GM12878 (cell line): ENCODE measurements at regions of chr11 and their contacts with region 1.

Region 1: DNA sequence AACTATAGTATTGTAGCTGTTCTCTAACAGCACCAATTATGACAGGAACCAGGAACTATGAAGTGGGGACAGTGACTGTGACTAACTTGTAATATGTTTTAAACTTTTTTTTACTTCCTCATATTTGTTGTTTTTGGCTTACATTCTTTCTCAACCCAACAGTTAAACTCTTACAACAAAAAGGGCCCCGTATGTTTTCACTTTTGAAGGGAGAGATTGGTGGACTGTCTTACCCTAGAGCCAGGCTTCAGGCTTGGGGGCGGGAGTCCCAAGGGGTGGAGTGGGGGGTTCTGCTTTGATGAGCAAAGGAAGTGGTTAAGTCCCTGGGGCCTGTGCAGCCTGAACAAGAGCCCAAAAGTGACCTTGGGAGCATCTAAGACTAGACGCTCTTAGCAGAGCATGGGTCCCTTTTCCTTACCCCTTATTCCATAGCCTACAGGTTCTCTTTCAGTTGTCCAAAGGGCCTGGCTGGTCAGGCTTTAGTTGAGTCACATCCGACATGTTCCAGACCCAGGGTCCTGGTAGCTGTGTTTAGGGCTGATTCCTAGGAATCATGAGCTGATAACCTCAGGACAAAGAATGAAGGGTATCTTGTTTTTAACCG is 38.8 kb downstream of the STIM1 start:
- DNase-seq: peak; percentile 91
- ATAC-seq: peak; percentile 98
- H3K4me3 ChIP-seq: peak overlapping the region; percentile 70
- H3K27ac ChIP-seq: peak overlapping the region; percentile 98
- H3K4me1 ChIP-seq: peaks cover 23% of the 10 kb centered on the region
- H3K27me3 ChIP-seq: no peaks in the 10 kb centered on the region
- CTCF ChIP-seq: no peak
- EP300 ChIP-seq: peak; percentile 81 to 85
- POLR2A ChIP-seq: peak; percentile 56
- RAD21 ChIP-seq: peak; percentile 36; the same call in 1 of the 2 replicates

Region 2: DNA sequence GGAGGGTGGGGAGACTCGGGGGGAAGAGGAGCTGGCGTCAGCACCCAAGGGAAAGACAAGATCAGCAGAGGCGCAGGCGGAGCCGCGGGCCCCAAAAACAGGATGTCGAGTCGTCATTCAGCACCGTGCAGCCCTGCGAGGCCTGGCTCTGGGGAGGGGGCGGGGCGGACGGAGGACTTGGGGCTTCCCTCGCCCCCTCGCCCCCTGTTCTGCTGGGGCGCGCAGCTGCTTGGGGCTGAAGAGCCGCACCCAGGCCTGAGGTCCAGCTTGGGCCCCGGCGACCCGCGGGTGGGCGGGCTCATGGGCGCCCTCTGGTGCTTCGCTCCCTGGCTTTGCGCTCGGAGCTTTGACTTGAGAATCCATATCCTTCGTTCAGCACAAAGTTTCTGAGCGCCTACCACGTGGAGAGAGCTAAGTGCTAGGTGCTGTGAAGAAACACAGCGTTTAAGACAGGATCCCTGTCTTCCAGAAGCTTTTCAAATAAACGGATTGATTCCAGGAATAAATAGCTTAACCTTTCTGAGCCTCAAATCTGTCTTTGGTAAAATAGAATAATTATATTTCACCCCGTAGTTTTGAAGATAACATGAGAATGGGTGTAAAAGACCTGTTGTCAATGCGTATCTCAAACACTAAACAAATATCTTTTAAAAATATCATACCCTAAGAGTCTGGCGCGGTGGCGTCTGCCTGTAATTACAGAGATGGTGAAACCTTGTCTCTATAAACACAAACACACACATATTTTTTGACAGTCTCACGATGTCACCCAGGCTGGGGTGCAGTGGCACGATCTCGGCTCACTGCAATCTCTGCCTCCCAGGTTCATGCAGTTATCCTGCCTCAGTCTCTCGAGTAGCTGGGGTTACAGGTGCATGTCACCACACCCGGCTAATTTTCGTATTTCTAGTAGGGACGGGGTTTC is 52.5 kb before region 1 on chr11:
- CTCF ChIA-PET with region 1: interaction called, 3 read pairs
- POLR2A ChIA-PET with region 1: interaction called, 19 read pairs
- RAD21 ChIA-PET with region 1: interaction called, 12 read pairs
- SMC1A ChIA-PET with region 1: interaction called, 6 read pairs
- in situ Hi-C with region 1: no loop called
- intact Hi-C with region 1: no loop called
- DNase-seq: peak; percentile 79
- ATAC-seq: peak; percentile 71
- H3K4me3 ChIP-seq: peak overlapping the region; percentile 98
- H3K27ac ChIP-seq: peak overlapping the region; percentile 82
- H3K4me1 ChIP-seq: peaks cover 15% of the 10 kb centered on the region
- H3K27me3 ChIP-seq: no peaks in the 10 kb centered on the region
- CTCF ChIP-seq: peak; percentile 78 to 88 (median 85)
- EP300 ChIP-seq: no peak
- POLR2A ChIP-seq: peak; percentile 71
- RAD21 ChIP-seq: peak; percentile 54

Region 3: GRCh38 chr11:3880724-3881123 is 13.5 kb before region 1 on chr11:
- CTCF ChIA-PET with region 1: interaction called, 16 read pairs
- POLR2A ChIA-PET with region 1: interaction called, 65 read pairs
- RAD21 ChIA-PET with region 1: interaction called, 53 read pairs
- SMC1A ChIA-PET with region 1: interaction called, 65 read pairs
- in situ Hi-C with region 1: no loop called
- intact Hi-C with region 1: no loop called
- DNase-seq: no peak
- ATAC-seq: peak; percentile 70
- H3K4me3 ChIP-seq: peak overlapping the region; percentile 46
- H3K27ac ChIP-seq: peak overlapping the region; percentile 83
- H3K4me1 ChIP-seq: peaks cover 65% of the 10 kb centered on the region
- H3K27me3 ChIP-seq: no peaks in the 10 kb centered on the region
- CTCF ChIP-seq: no peak
- EP300 ChIP-seq: no peak
- POLR2A ChIP-seq: 0 out of 2 replicates have a peak, but pooled peaks have one; percentile 19
- RAD21 ChIP-seq: no peak

Region 4: DNA sequence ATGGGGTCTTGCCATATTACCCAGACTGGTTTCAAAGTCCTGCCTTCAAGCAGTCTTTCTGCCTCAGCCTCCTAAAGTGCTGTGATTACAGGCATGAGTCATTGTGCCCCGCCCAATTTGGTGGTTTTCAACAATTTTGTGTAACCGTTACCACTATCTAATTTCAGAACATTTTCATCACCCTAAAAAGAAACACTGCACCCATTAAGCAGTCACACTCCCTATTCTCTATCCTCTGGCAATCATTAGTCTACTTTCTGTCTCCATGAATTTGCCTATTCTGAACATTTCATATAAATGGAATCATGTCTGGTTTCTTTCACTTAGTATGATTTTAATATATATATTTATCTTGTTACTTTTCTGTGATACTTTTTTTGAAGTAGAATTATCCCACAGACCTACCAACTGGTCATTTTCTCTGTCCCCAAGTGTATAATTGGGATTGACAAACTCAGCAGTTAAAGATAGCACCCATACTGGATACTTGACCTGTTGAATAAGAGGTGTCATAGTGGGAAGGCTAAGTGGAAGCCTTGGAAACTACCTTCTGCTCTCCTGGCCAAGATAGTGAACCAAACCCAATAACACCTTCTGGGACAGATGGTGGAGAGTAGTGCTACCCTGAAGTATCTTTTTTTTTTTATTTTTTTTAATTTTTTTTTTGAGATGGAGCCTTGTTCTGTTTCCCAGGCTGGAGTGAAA is 26.1 kb after region 1 on chr11:
- CTCF ChIA-PET with region 1: interaction called, 10 read pairs
- POLR2A ChIA-PET with region 1: interaction called, 4 read pairs
- RAD21 ChIA-PET with region 1: interaction called, 9 read pairs
- SMC1A ChIA-PET with region 1: interaction called, 19 read pairs
- in situ Hi-C with region 1: no loop called
- intact Hi-C with region 1: loop called (anchors 1 kb)
- DNase-seq: peak; percentile 57
- ATAC-seq: peak; percentile 91
- H3K4me3 ChIP-seq: peak overlapping the region; percentile 19; the same call in 1 of the 2 replicates
- H3K27ac ChIP-seq: peak overlapping the region; percentile 27; the same call in 1 of the 2 replicates
- H3K4me1 ChIP-seq: peaks cover 6% of the 10 kb centered on the region
- H3K27me3 ChIP-seq: no peaks in the 10 kb centered on the region
- CTCF ChIP-seq: no peak
- EP300 ChIP-seq: peak in 1 of 2 experiments; percentile 50; a peak in 2 of 4 replicates
- POLR2A ChIP-seq: no peak
- RAD21 ChIP-seq: no peak

Region 5: DNA sequence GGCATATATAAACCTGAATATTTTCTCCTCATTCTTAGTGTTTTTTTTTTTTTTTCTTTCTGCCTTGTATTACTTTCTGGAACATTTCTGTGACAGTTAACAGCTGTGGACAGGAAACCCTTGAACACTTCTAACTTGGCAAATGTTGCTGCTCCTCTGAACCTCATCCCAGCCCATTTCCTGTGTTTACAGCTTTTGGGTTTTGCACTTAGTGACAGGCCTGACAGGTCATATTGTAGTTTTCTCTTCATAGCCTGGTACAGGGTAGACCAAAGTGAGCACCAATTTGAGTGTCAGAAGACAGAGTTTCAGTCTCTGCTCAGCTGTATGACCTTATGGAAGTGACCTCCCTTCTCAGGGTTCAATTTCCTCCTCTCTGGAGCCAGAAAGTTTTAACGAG is 52.8 kb after region 1 on chr11:
- CTCF ChIA-PET with region 1: no interaction called
- POLR2A ChIA-PET with region 1: no interaction called
- RAD21 ChIA-PET with region 1: interaction called, 5 read pairs
- SMC1A ChIA-PET with region 1: interaction called, 12 read pairs
- in situ Hi-C with region 1: no loop called
- intact Hi-C with region 1: no loop called
- DNase-seq: peak; percentile 76
- ATAC-seq: peak; percentile 78
- H3K4me3 ChIP-seq: 0 out of 2 replicates have a peak overlapping the region, but pooled peaks have one; percentile 19
- H3K27ac ChIP-seq: peak overlapping the region; percentile 52
- H3K4me1 ChIP-seq: peaks cover 55% of the 10 kb centered on the region
- H3K27me3 ChIP-seq: no peaks in the 10 kb centered on the region
- CTCF ChIP-seq: no peak
- EP300 ChIP-seq: no peak
- POLR2A ChIP-seq: no peak
- RAD21 ChIP-seq: no peak

Region 6: GRCh38 chr11:4060182-4060923 is 166.1 kb after region 1 on chr11:
- CTCF ChIA-PET with region 1: interaction called, 3 read pairs
- POLR2A ChIA-PET with region 1: interaction called, 4 read pairs
- RAD21 ChIA-PET with region 1: interaction called, 10 read pairs
- SMC1A ChIA-PET with region 1: interaction called, 5 read pairs
- in situ Hi-C with region 1: no loop called
- intact Hi-C with region 1: no loop called
- DNase-seq: no peak
- ATAC-seq: no peak
- H3K4me3 ChIP-seq: no peak overlapping the region
- H3K27ac ChIP-seq: no peak overlapping the region
- H3K4me1 ChIP-seq: peaks cover 19% of the 10 kb centered on the region
- H3K27me3 ChIP-seq: no peaks in the 10 kb centered on the region
- CTCF ChIP-seq: no peak
- EP300 ChIP-seq: no peak
- POLR2A ChIP-seq: no peak
- RAD21 ChIP-seq: no peak